ENCODE measurements at regions of chr11 and their contacts with region 1.

Region 1: GRCh38 chr11:94171693-94172440 is 43.2 kb downstream of the PANX1 start:
- DNase-seq: peak; percentile 67 to 69
- H3K4me3 ChIP-seq: no peak overlapping the region
- H3K27ac ChIP-seq: no peak overlapping the region
- H3K4me1 ChIP-seq: peaks cover 0 to 4% of the 10 kb centered on the region in 2 donors
- H3K27me3 ChIP-seq: no peaks in the 10 kb centered on the region
- CTCF ChIP-seq: peak; percentile 45 to 78 (median 62)
- POLR2A ChIP-seq: no peak

Region 2: GRCh38 chr11:94424662-94425061 is 252.8 kb after region 1 on chr11:
- intact Hi-C with region 1: loop called (anchors 10 kb)
- DNase-seq: no peak
- H3K4me3 ChIP-seq: no peak overlapping the region
- H3K27ac ChIP-seq: no peak overlapping the region
- H3K4me1 ChIP-seq: peaks cover 4 to 14% of the 10 kb centered on the region in 2 donors
- H3K27me3 ChIP-seq: no peaks in the 10 kb centered on the region
- CTCF ChIP-seq: no peak
- POLR2A ChIP-seq: no peak

Region 3: GRCh38 chr11:94493281-94494125 is 321.6 kb after region 1 on chr11 and contains the starts of genes ANKRD49 and MRE11:
- intact Hi-C with region 1: loop called (anchors 5 kb)
- DNase-seq: peak; percentile 98
- H3K4me3 ChIP-seq: peak within 1 kb of the TSS; percentile 77 to 98 (median 87)
- H3K27ac ChIP-seq: peak within 1 kb of the TSS; percentile 79 to 87 (median 84)
- H3K4me1 ChIP-seq: peaks cover 10 to 15% of the 10 kb centered on the region in 2 donors
- H3K27me3 ChIP-seq: no peaks in the 10 kb centered on the region
- CTCF ChIP-seq: peak in 1 of 6 experiments; percentile 5
- POLR2A ChIP-seq: peak in 1 of 2 donors; percentile 68
- total RNA-seq, gene ANKRD49: 29.8 to 61.4 (median 32.2) TPM
- total RNA-seq, gene MRE11: 18.4 to 25.0 (median 22.8) TPM

Measured in thyroid gland (tissue), 4 donors.